ENCODE measurements at regions of chr15 and their contacts with region 1.

Region 1: GRCh38 chr15:67433495-67434099 is 87.3 kb upstream of the C15orf61 start:
- DNase-seq: peak; percentile 37
- H3K4me3 ChIP-seq: no peak overlapping the region
- H3K27ac ChIP-seq: no peak overlapping the region
- H3K4me1 ChIP-seq: peaks cover 0 to 5% (median 3%) of the 10 kb centered on the region in 4 donors
- H3K27me3 ChIP-seq: no peaks in the 10 kb centered on the region
- CTCF ChIP-seq: peak; percentile 55 to 74 (median 73)
- EP300 ChIP-seq: no peak
- POLR2A ChIP-seq: no peak

Region 2: GRCh38 chr15:66966257-66966656 is 467.3 kb before region 1 on chr15:
- in situ Hi-C with region 1: loop called in 1 of 4 experiments (anchors 25 kb)
- intact Hi-C with region 1: no loop called
- DNase-seq: no peak
- H3K4me3 ChIP-seq: no peak overlapping the region
- H3K27ac ChIP-seq: no peak overlapping the region
- H3K4me1 ChIP-seq: no peaks in the 10 kb centered on the region
- H3K27me3 ChIP-seq: no peaks in the 10 kb centered on the region
- CTCF ChIP-seq: no peak
- EP300 ChIP-seq: no peak
- POLR2A ChIP-seq: no peak

Region 3: GRCh38 chr15:67812241-67812644 is 378.6 kb after region 1 on chr15:
- in situ Hi-C with region 1: no loop called
- intact Hi-C with region 1: no loop called
- DNase-seq: no peak
- H3K4me3 ChIP-seq: no peak overlapping the region
- H3K27ac ChIP-seq: no peak overlapping the region
- H3K4me1 ChIP-seq: no peaks in the 10 kb centered on the region
- H3K27me3 ChIP-seq: peaks cover 9% of the 10 kb centered on the region
- CTCF ChIP-seq: no peak
- EP300 ChIP-seq: no peak
- POLR2A ChIP-seq: no peak